ENCODE measurements at regions of chr3 and their contacts with region 1.

Region 1: GRCh38 chr3:182668974-182669373 is 124.3 kb upstream of the ATP11B start:
- DNase-seq: peak; percentile 56
- H3K4me3 ChIP-seq: no peak overlapping the region
- H3K27ac ChIP-seq: peak overlapping the region; percentile 75
- H3K4me1 ChIP-seq: peaks cover 19% of the 10 kb centered on the region
- H3K27me3 ChIP-seq: no peaks in the 10 kb centered on the region
- CTCF ChIP-seq: no peak

Region 2: DNA sequence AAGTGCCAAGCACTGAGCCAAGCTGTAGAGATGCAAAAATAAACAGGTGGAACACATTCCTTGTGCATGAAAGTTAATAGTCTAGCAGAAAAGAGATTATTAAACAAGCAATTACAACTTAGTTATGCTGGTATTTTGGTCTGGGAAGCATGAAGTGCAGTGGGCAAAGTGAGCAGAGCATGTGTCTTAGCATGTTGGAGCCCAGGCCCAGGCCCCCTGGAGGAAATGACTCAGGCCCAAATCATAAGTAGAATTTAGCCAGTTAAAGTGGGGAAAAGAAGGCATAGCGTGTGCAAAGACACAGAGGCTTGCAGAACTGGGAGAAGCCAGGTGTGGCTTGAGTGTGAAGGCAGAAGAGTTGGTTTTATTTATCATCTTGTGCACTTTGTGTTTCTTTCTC is 39.5 kb before region 1 on chr3:
- CTCF ChIA-PET with region 1: no interaction called
- dilution Hi-C with region 1: no loop called
- in situ Hi-C with region 1: no loop called
- intact Hi-C with region 1: loop called (anchors 2 kb)
- DNase-seq: peak; percentile 85
- H3K4me3 ChIP-seq: no peak overlapping the region
- H3K27ac ChIP-seq: peak overlapping the region; percentile 52
- H3K4me1 ChIP-seq: peaks cover 34% of the 10 kb centered on the region
- H3K27me3 ChIP-seq: no peaks in the 10 kb centered on the region
- CTCF ChIP-seq: peak in 1 of 2 donors; percentile 5

Measured in mammary epithelial cell (primary cell).